ENCODE measurements at regions of chr5 and their contacts with region 1.

Region 1: DNA sequence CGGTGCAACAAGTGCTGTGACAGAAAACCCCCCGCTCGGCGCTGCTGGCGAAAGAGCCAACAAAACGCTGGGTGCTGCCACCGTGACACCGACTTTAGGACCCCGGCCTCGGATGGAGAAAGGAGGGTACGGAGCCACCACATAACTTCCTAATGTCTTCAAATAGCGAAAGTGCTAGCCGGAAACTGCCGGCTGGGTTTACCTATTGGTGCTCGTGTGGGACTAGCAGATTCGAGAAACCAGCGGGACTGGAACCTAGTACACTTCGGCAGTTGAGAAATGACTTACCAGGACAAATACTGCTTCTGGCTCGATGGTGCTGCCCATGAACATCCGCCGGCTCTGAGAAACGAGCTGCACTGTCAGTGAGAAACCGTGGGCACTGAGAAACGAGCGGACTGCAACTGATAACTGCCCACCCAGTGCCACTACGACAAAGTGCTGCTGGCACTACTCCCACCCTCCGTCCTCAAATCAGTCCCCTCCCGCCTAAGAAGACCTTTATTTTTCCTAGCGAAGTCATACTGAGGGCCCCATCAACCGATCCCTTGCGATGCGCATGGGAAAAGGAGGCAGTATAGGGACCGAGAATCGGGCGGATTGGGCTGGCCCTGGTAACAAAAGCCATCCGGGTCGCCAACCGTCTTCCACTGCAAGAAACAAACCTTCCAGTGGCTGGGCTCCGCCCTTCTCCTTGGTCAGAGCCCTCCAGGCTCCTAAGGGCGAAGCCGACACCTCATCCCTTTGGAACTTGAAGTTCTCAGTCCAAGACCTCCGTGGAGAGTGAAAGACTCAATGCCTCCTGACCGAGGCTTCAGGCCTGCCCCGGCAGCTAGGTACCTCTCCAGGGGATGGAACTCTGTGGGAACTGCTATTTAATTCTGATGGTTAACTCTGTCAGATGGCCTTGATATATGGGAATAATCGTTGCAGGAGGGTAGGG is 27.0 kb upstream of the ANXA2R start:
- DNase-seq: peak; percentile 85
- H3K4me3 Mint-ChIP-seq: peak overlapping the region; percentile 91
- H3K27ac Mint-ChIP-seq: peak overlapping the region; percentile 97
- H3K4me1 Mint-ChIP-seq: peaks cover 32% of the 10 kb centered on the region
- H3K27me3 Mint-ChIP-seq: no peaks in the 10 kb centered on the region

Region 2: DNA sequence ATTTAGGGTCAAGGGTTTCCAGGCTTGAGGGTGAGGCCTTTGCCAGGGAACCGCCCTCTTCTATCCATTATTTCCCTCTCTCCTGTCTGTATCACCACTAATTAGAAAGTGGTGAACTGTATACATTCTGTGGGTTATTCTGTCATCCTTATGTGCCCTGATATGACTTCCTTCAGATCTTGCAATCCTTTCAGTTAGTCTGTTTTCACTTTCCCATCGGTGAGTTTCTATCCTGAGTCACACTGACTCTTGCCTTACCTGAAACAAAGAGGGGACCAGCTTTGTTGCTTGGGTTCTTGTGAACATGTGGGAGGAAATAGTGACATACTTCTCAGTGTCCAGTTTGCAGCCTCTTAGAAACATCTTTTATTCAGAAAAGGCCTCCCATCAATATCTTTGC is 849.3 kb before region 1 on chr5:
- intact Hi-C with region 1: no loop called
- DNase-seq: no peak
- H3K4me3 Mint-ChIP-seq: no peak overlapping the region
- H3K27ac Mint-ChIP-seq: no peak overlapping the region
- H3K4me1 Mint-ChIP-seq: no peaks in the 10 kb centered on the region
- H3K27me3 Mint-ChIP-seq: no peaks in the 10 kb centered on the region

Region 3: DNA sequence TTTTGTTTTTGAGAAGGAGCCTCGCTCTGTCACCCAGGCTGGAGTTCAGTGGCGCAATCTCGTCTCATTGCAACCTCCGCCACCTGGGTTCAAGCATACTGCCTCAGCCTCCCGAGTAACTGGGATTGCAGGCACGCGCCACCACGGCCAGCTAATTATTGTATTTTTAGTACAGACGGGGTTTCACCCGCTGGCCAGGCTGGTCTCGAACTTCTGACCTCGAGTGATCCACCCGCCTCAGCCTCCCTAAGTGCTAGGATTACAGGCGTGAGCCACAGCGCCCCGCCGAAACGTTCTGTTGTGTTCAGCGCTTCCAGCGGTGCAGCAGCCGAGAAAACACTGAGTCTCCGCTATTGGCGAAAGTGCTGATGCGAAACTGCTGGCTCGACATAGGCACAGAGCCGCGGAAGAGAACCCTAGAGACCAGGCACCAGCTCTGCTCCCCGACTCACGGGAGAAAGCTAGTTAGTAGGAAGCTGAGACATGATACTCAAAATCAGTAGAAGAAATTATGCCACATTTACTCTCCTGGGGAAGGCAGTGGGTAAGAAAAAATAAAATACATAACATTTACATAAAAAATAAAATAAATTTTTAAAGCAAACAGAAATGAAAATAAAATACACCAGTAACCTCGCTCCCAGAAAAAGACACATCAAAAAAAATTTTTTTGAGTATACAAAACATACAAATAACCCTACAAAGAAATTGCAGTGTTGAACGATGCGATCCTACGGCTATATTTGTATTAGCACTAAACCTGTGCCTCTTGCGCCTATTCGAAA is 58.5 kb before region 1 on chr5:
- intact Hi-C with region 1: loop called (anchors 1 kb)
- DNase-seq: peak; percentile 88
- H3K4me3 Mint-ChIP-seq: peak overlapping the region; percentile 85
- H3K27ac Mint-ChIP-seq: peak overlapping the region; percentile 95
- H3K4me1 Mint-ChIP-seq: peaks cover 24% of the 10 kb centered on the region
- H3K27me3 Mint-ChIP-seq: no peaks in the 10 kb centered on the region

Region 4: GRCh38 chr5:43040287-43041098 is 26.6 kb before region 1 on chr5 and contains the start of gene ANXA2R:
- intact Hi-C with region 1: loop called (anchors 1 kb)
- DNase-seq: peak; percentile 95
- H3K4me3 Mint-ChIP-seq: peak within 1 kb of the TSS; percentile 92
- H3K27ac Mint-ChIP-seq: peak within 1 kb of the TSS; percentile 97
- H3K4me1 Mint-ChIP-seq: peaks cover 47% of the 10 kb centered on the region
- H3K27me3 Mint-ChIP-seq: no peaks in the 10 kb centered on the region
- total RNA-seq, gene ANXA2R: 2.1 and 2.5 TPM in 2 replicates

Region 5: GRCh38 chr5:43313035-43313853 is 246.2 kb after region 1 on chr5 and contains the start of gene HMGCS1:
- intact Hi-C with region 1: loop called (anchors 2 kb)
- DNase-seq: peak; percentile 99
- H3K4me3 Mint-ChIP-seq: peak within 1 kb of the TSS; percentile 98
- H3K27ac Mint-ChIP-seq: peak within 1 kb of the TSS; percentile 95
- H3K4me1 Mint-ChIP-seq: peaks cover 67% of the 10 kb centered on the region
- H3K27me3 Mint-ChIP-seq: no peaks in the 10 kb centered on the region
- total RNA-seq, gene HMGCS1: 232 and 233 TPM in 2 replicates

Region 6: GRCh38 chr5:43602461-43603343 is 535.6 kb after region 1 on chr5 and contains the start of gene NNT:
- intact Hi-C with region 1: loop called (anchors 10 kb)
- DNase-seq: peak; percentile 75
- H3K4me3 Mint-ChIP-seq: peak within 1 kb of the TSS; percentile 87
- H3K27ac Mint-ChIP-seq: peak within 1 kb of the TSS; percentile 82
- H3K4me1 Mint-ChIP-seq: peaks cover 23% of the 10 kb centered on the region
- H3K27me3 Mint-ChIP-seq: no peaks in the 10 kb centered on the region
- total RNA-seq, gene NNT: 64.1 and 64.8 TPM in 2 replicates